ENCODE measurements at regions of chr18 and their contacts with region 1.

Region 1: DNA sequence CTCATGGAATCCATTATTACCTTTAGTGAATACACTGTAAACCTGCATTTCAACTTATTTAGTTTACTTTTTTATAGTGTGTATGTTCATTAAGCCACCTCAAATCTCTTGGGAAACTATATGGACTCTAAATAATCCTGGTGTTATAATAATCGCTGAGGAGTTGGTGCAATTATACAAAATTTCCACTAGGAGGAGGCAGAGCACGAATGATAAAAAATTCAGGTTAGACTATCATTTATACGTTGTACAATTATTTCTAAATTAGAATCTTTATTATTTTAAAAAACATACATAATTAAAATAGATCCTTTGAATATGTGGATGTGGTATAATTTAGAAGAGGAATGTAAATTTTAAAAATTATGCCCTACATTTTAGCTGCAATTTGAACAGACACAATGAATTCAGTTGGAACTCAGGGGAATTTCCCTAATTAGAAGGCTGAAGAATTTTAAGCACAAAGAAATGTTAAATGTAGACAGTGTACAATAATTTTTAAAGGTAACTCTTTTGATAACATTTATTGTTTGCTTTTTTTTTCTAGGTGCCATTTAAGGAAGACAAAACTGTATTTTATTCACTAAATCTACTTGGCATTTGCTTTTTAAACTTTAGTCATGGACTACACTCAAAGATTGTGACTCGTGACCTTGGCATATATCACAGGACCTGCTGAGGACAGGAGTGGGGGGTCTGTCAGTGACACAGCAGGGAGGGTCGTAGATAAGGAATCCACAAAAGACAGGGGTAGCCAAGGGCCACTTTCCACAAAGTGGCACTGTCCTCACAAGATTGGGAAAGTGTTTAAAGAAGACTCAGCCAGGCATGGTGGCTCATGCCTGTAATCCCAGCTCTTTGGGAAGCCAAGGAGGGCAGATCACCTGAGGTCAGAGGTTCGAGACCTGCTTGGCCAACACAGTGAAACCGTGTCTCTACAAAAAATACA is 45.5 kb downstream of the RAB12 start:
- DNase-seq: peak; percentile 44
- H3K4me3 ChIP-seq: no peak overlapping the region
- H3K27ac ChIP-seq: no peak overlapping the region
- H3K4me1 ChIP-seq: no peaks in the 10 kb centered on the region
- H3K27me3 ChIP-seq: peaks cover 14% of the 10 kb centered on the region
- CTCF ChIP-seq: peak; percentile 82

Region 2: DNA sequence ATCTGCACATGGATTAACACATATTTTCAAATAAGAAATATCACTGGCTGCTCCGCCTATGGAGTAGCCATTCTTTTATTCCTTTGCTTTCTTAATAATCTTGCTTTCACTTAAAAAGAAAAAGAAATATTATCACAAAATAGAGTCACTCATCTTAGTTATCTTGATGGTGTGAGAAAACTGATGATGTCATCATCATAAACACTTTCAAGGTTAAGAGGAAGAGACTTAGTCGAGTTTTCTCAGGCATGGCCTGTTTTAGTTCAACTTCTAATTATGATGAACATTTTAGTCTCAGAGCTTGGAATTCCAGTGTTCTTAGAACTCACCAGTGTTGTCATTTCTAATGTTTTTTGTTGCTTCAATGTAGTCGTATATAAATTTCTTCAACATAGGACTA is 581.6 kb before region 1 on chr18:
- CTCF ChIA-PET with region 1: no interaction called
- POLR2A ChIA-PET with region 1: no interaction called
- intact Hi-C with region 1: no loop called
- DNase-seq: no peak
- H3K4me3 ChIP-seq: no peak overlapping the region
- H3K27ac ChIP-seq: no peak overlapping the region
- H3K4me1 ChIP-seq: no peaks in the 10 kb centered on the region
- H3K27me3 ChIP-seq: no peaks in the 10 kb centered on the region
- CTCF ChIP-seq: no peak

Region 3: DNA sequence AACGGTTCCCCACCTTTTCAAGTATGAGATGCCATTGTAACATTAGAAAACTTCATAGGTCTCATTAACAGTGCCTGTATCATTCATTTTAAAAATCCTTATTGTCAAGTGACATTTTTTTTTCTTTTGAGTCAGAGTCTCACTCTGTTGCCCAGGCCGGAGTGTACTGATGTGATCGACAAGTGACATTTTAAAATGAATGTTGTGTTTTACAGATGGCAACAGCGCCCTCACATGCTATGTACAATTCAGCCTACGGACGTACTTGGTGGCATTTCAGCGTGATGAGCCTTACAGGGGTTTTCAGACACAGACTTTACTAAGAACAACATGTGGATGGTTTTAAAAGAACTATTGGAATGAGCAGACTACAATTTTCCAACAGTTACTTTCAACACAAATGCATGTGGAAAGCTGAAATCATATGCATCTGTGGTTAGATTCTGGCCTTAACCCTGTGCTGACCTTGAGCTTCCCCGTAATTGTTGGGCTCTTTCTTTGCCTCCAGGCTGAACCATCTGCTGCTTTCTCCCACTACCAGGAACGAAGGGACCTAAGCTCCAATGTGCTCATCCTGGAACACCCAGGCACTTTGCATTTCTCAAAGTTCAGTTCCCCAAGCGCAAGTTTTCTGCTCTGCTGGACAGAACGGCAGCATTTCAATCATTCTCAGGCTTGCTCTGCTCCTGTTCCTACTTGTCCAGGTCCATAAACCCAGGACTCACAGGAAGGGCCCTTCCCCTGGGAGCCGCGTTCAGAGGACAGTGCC is 327.8 kb after region 1 on chr18:
- CTCF ChIA-PET with region 1: interaction called, 6 read pairs
- POLR2A ChIA-PET with region 1: no interaction called
- intact Hi-C with region 1: loop called (anchors 1 kb)
- DNase-seq: peak; percentile 80
- H3K4me3 ChIP-seq: no peak overlapping the region
- H3K27ac ChIP-seq: no peak overlapping the region
- H3K4me1 ChIP-seq: no peaks in the 10 kb centered on the region
- H3K27me3 ChIP-seq: no peaks in the 10 kb centered on the region
- CTCF ChIP-seq: peak; percentile 73

Region 4: DNA sequence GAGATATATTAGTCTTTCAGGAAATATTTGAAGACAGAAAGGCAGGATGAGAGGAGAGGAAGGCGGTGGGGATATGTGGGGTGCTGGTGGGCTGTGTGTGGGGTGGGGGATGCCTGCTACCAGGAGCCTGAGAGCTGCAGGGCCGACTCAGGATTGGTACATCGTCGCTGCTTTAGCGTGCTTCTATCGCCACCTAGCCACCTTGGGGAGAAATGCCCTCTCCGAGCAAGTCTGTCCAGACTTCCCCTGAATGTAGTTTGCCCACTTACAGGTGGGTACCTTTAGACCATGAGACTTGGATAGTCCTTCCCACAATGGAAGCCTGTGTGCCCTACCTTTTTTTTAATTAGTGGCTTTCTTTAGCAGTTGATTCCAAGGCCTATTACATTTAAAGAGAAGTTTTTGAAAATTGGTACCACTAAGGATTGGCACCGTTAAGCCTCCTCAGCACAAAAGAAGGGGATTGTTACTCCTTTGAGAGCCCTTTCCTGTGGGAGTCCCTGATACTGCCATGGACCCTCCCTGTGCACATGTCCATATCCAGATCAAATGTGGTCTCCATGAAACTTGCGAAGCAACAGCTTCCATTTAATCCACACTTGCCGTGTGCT is 333.6 kb after region 1 on chr18:
- CTCF ChIA-PET with region 1: interaction called, 6 read pairs
- POLR2A ChIA-PET with region 1: no interaction called
- intact Hi-C with region 1: loop called (anchors 2 kb)
- DNase-seq: peak; percentile 69
- H3K4me3 ChIP-seq: no peak overlapping the region
- H3K27ac ChIP-seq: no peak overlapping the region
- H3K4me1 ChIP-seq: no peaks in the 10 kb centered on the region
- H3K27me3 ChIP-seq: no peaks in the 10 kb centered on the region
- CTCF ChIP-seq: peak; percentile 84

Region 5: DNA sequence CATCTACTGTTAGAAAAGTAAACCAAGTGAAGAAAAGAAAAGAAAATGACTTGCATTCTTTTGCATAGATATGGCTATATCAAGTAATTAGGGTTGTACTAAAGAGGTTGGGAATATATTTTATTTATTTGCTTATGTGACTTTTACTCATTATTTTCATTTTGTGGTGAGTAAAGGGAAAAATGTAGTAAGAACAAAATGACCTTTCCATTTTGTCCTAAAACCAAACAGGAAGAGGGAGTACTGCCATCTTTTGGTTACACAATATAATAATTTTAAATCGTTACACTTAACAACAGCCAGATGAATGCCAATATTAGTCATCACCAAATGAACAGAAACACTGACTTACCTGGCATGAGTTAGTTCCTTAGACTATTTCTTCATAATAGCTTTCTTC is 400.4 kb after region 1 on chr18:
- CTCF ChIA-PET with region 1: interaction called, 5 read pairs
- POLR2A ChIA-PET with region 1: no interaction called
- intact Hi-C with region 1: loop called (anchors 10 kb)
- DNase-seq: peak; percentile 36
- H3K4me3 ChIP-seq: no peak overlapping the region
- H3K27ac ChIP-seq: no peak overlapping the region
- H3K4me1 ChIP-seq: no peaks in the 10 kb centered on the region
- H3K27me3 ChIP-seq: no peaks in the 10 kb centered on the region
- CTCF ChIP-seq: peak; percentile 45

Region 6: DNA sequence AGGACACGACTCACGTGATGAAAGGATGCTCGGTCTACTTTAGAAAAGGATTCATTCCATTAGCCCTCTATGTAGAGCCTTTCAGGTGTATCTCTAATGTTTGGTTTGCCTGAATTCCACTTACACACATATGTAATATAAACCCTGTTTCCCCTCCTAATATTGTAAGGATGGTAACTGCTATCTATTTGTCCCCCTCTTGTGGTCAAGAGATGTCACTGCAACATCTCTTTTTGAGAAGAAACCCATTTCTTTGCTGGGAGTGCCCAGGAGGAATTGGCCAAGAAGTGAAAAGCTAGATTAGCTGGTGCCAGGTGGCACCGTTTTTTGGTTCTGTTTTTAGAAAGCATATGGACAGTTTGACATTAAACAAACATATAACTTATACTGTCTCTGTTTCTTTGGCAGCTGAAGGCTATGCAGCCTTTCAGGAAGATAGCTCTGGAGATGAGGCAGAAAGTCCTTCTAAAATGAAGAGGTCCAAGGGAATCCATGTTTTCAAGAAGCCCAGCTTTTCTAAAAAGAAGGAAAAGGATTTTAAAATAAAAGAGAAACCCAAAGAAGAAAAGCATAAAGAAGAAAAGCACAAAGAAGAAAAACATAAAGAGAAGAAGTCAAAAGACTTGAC is 861.8 kb after region 1 on chr18:
- CTCF ChIA-PET with region 1: no interaction called
- POLR2A ChIA-PET with region 1: no interaction called
- intact Hi-C with region 1: loop called (anchors 10 kb)
- DNase-seq: peak; percentile 68
- H3K4me3 ChIP-seq: no peak overlapping the region
- H3K27ac ChIP-seq: no peak overlapping the region
- H3K4me1 ChIP-seq: no peaks in the 10 kb centered on the region
- H3K27me3 ChIP-seq: no peaks in the 10 kb centered on the region
- CTCF ChIP-seq: peak; percentile 91

Measured in A673 (cell line).